PC-3 (cell line): ENCODE measurements at regions of chr18 and their contacts with region 1.

Region 1: GRCh38 chr18:28176933-28177827 is at the start of gene CDH2:
- DNase-seq: peak; percentile 82
- ATAC-seq: peak; percentile 51
- H3K4me3 ChIP-seq: peak within 1 kb of the TSS; percentile 93
- H3K27ac ChIP-seq: peak within 1 kb of the TSS; percentile 22; the same call in 1 of the 2 replicates
- H3K4me1 ChIP-seq: peaks cover 57% of the 10 kb centered on the region
- H3K27me3 ChIP-seq: no peaks in the 10 kb centered on the region
- CTCF ChIP-seq: no peak; the same call in 1 of the 2 replicates
- total RNA-seq, gene CDH2: 34.0 and 39.2 TPM in 2 replicates

Region 2: GRCh38 chr18:27605107-27605834 is 571.9 kb before region 1 on chr18:
- CTCF ChIA-PET with region 1: no interaction called
- POLR2A ChIA-PET with region 1: no interaction called
- intact Hi-C with region 1: loop called (anchors 2 kb)
- DNase-seq: peak; percentile 83
- ATAC-seq: peak; percentile 93
- H3K4me3 ChIP-seq: no peak overlapping the region
- H3K27ac ChIP-seq: no peak overlapping the region
- H3K4me1 ChIP-seq: peaks cover 11% of the 10 kb centered on the region
- H3K27me3 ChIP-seq: no peaks in the 10 kb centered on the region
- CTCF ChIP-seq: peak; percentile 87

Region 3: GRCh38 chr18:27839141-27839540 is 338.0 kb before region 1 on chr18:
- CTCF ChIA-PET with region 1: no interaction called
- POLR2A ChIA-PET with region 1: no interaction called
- intact Hi-C with region 1: loop called (anchors 5 kb)
- DNase-seq: peak; percentile 96
- ATAC-seq: peak; percentile 94
- H3K4me3 ChIP-seq: no peak overlapping the region
- H3K27ac ChIP-seq: peak overlapping the region; percentile 72
- H3K4me1 ChIP-seq: peaks cover 60% of the 10 kb centered on the region
- H3K27me3 ChIP-seq: no peaks in the 10 kb centered on the region
- CTCF ChIP-seq: no peak

Region 4: DNA sequence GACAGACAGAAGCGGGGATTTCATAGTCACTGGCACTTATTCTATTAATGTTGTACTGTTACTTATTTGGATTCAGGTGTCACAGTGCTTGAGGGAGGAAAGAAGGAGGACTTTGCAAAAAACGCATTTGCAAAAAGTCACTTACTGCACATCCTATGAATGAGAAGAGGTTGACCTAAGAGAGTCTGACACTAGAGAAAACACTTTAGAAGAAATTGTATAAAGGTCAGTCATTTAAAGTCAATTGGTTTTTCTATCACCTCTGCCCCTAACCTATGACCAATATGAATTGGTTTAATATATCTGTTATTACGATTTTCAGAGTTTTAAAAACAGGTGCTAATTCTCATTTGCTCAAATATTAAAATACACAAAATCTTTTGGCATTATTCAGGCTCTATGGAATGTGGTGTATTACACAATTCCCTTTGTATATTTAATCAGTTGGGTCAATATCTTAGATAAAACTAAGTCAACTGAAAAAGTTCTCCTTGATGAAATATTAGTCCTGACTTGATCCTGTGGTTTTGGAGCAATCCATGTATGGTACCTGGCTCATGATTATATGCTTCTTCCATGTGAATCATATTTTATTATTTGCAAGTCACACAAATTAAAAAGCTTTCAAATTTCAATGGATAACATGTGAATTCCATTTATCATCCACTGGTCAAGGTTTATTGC is 157.6 kb before region 1 on chr18:
- CTCF ChIA-PET with region 1: no interaction called
- POLR2A ChIA-PET with region 1: no interaction called
- intact Hi-C with region 1: loop called (anchors 5 kb)
- DNase-seq: peak; percentile 87
- ATAC-seq: peak; percentile 96
- H3K4me3 ChIP-seq: no peak overlapping the region
- H3K27ac ChIP-seq: no peak overlapping the region
- H3K4me1 ChIP-seq: peaks cover 25% of the 10 kb centered on the region
- H3K27me3 ChIP-seq: no peaks in the 10 kb centered on the region
- CTCF ChIP-seq: no peak

Region 5: DNA sequence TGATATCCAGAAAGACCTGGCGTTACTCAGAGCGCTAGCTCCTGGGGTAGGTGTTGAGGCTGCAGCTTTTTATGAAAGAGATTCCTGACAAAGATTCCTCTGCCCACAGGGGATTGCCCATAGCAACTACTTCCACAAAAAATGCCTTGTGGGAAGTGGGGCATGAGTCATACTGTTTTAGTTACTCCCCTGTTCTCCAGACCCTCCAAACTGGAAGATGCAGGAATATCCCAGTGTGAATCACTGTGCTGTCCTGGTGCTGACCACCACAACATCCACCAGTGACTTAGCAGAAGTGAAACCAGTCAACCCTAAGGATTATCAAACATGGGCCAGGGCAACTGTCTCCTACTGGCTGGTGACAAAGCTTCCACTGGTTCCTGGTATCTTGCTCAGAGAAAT is 62.0 kb before region 1 on chr18:
- CTCF ChIA-PET with region 1: no interaction called
- POLR2A ChIA-PET with region 1: interaction called, 4 read pairs
- intact Hi-C with region 1: loop called (anchors 1 kb)
- DNase-seq: peak; percentile 90
- ATAC-seq: peak; percentile 37
- H3K4me3 ChIP-seq: peak overlapping the region; percentile 58
- H3K27ac ChIP-seq: peak overlapping the region; percentile 92
- H3K4me1 ChIP-seq: peaks cover 65% of the 10 kb centered on the region
- H3K27me3 ChIP-seq: no peaks in the 10 kb centered on the region
- CTCF ChIP-seq: no peak

Region 6: DNA sequence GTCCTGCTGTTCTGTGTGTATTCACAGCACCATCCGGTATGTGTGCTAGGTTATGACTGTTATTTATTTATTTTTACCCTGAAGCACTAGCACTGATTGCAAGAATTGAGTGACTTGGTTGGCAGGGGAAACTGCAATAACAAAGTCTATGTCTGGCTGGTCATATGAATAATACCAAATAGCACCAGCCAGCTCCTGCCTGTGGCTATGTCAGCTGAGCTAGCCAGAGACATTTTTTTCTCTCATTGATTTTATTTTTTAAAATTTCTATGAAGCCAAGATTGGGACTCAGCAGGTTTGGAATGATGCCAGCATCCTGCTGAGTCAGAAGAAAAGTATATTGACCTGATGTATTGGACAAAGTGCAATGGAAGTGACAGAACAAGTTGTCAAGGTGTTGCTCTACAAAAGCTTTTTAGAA is 188.2 kb after region 1 on chr18:
- CTCF ChIA-PET with region 1: no interaction called
- POLR2A ChIA-PET with region 1: no interaction called
- intact Hi-C with region 1: loop called (anchors 5 kb)
- DNase-seq: peak; percentile 93
- ATAC-seq: peak; percentile 80
- H3K4me3 ChIP-seq: no peak overlapping the region
- H3K27ac ChIP-seq: peak overlapping the region; percentile 53
- H3K4me1 ChIP-seq: peaks cover 23% of the 10 kb centered on the region
- H3K27me3 ChIP-seq: no peaks in the 10 kb centered on the region
- CTCF ChIP-seq: no peak

Region 7: DNA sequence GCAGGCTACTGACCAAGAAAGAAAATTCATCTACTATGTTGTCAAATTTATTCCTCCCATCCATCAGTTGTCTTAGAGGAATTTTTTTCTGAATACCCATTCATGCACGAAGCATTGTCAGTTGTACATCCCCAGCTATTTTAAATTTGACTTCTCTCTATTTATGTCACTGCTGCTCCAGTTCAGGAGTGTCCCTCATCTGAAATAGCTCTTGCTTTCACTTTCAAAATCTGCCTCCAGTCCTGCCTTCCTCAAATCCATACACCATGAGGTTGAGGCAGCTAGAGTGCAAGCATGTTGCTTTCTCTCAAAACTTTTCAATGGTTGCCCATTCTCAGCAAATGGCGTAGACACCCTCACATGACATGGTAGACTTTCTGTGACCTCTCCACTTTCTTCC is 335.2 kb after region 1 on chr18:
- CTCF ChIA-PET with region 1: no interaction called
- POLR2A ChIA-PET with region 1: interaction called, 24 read pairs
- intact Hi-C with region 1: no loop called
- DNase-seq: no peak
- ATAC-seq: no peak
- H3K4me3 ChIP-seq: no peak overlapping the region
- H3K27ac ChIP-seq: no peak overlapping the region
- H3K4me1 ChIP-seq: peaks cover 21% of the 10 kb centered on the region
- H3K27me3 ChIP-seq: no peaks in the 10 kb centered on the region
- CTCF ChIP-seq: no peak